ENCODE measurements at regions of chr16 and their contacts with region 1.

Region 1: GRCh38 chr16:69396187-69397061 is 10.6 kb upstream of the TERF2 start:
- DNase-seq: peak; percentile 68
- H3K4me3 ChIP-seq: peak overlapping the region in 1 of 2 experiments; percentile 30; a peak in 1 of 4 replicates
- H3K27ac ChIP-seq: peak overlapping the region; percentile 81 to 84
- H3K4me1 ChIP-seq: peaks cover 3 to 23% of the 10 kb centered on the region in 2 experiments
- H3K27me3 ChIP-seq: no peaks in the 10 kb centered on the region
- CTCF ChIP-seq: peak; percentile 76
- EP300 ChIP-seq: no peak
- RAD21 ChIP-seq: peak; percentile 81

Region 2: GRCh38 chr16:69406780-69407331 is 10.4 kb after region 1 on chr16:
- CTCF ChIA-PET with region 1: interaction called, 10 read pairs
- POLR2A ChIA-PET with region 1: interaction called, 3 read pairs
- DNase-seq: no peak
- H3K4me3 ChIP-seq: no peak overlapping the region
- H3K27ac ChIP-seq: no peak overlapping the region
- H3K4me1 ChIP-seq: peaks cover 7 to 23% of the 10 kb centered on the region in 2 experiments; a peak in 3 of 4 replicates
- H3K27me3 ChIP-seq: no peaks in the 10 kb centered on the region
- CTCF ChIP-seq: no peak
- EP300 ChIP-seq: no peak
- RAD21 ChIP-seq: no peak

Region 3: DNA sequence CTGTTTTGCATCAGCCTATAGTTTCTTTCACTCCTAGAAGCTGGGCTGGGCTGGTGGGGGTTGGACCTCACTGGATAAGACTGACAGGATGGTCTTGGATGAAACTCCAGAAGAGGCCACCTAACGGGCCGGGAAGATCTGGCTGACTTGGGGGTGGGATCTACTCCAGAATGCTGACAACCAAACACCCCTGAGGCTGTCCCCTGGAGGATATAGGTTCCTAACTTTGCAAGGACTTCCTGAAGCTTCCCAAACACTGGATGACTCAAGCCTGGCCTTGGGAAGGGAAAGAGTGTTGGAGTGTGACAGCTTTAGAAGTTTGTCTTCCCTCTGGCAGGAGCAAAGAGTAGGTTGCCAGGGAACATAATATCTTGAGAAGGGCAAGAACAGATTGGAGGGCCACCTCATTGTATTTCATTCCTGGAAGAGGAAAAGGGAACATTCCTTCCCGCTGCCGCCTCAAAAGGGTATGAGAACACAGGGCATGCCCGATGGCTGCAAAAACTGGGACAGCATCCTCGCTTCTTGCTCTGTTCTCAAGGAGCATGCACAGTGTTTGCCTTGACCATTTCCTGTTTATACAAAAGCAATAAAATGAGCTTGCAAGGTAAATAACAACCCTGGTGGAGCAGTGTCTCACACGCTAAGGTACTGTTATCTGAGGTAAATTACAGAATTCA is 21.2 kb after region 1 on chr16:
- CTCF ChIA-PET with region 1: interaction called, 11 read pairs
- POLR2A ChIA-PET with region 1: no interaction called
- DNase-seq: no peak
- H3K4me3 ChIP-seq: no peak overlapping the region
- H3K27ac ChIP-seq: peak overlapping the region in 1 of 2 experiments; percentile 53; a peak in 2 of 4 replicates
- H3K4me1 ChIP-seq: 0 out of 4 replicates have a peak, but pooled peaks cover 0 to 3% of the 10 kb centered on the region in 2 experiments
- H3K27me3 ChIP-seq: no peaks in the 10 kb centered on the region
- CTCF ChIP-seq: no peak
- EP300 ChIP-seq: no peak
- RAD21 ChIP-seq: no peak

Region 4: DNA sequence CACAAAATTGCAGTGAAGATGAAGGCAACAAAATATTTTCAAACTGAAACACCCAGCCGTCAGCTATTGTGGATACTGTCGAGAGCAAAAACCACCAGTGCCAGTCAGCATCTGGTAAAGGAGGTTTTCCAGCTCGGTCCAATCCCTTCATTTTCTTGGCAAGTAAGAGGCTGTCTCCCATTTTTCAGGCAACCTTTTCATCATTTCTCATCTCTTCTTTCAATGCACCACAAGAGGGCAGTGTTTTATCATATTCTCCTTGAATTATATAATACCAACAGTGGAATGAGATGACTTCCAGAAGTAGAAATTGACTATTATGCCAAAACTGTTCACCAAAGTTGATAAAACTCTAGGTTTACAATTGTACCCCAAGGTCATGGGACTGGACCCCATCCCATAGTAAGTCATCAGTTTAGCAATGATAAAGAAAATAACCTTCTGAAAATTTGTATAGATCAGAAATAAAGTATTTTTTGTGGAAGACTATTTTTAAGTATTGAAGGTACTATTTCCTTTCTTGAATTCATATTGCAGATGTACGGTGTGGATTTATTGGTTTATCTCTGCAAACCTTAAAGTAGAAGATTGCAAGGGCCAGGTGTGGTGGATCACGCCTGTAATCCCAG is 313.1 kb after region 1 on chr16:
- CTCF ChIA-PET with region 1: interaction called, 11 read pairs
- POLR2A ChIA-PET with region 1: no interaction called
- DNase-seq: peak; percentile 59
- H3K4me3 ChIP-seq: no peak overlapping the region
- H3K27ac ChIP-seq: peak overlapping the region in 1 of 2 experiments; percentile 26; a peak in 1 of 4 replicates
- H3K4me1 ChIP-seq: no peaks in the 10 kb centered on the region
- H3K27me3 ChIP-seq: no peaks in the 10 kb centered on the region
- CTCF ChIP-seq: peak; percentile 77
- EP300 ChIP-seq: no peak
- RAD21 ChIP-seq: peak; percentile 86